Sciatic nerve (tissue), 2 donors: ENCODE measurements at regions of chr2 and their contacts with region 1.

Region 1: DNA sequence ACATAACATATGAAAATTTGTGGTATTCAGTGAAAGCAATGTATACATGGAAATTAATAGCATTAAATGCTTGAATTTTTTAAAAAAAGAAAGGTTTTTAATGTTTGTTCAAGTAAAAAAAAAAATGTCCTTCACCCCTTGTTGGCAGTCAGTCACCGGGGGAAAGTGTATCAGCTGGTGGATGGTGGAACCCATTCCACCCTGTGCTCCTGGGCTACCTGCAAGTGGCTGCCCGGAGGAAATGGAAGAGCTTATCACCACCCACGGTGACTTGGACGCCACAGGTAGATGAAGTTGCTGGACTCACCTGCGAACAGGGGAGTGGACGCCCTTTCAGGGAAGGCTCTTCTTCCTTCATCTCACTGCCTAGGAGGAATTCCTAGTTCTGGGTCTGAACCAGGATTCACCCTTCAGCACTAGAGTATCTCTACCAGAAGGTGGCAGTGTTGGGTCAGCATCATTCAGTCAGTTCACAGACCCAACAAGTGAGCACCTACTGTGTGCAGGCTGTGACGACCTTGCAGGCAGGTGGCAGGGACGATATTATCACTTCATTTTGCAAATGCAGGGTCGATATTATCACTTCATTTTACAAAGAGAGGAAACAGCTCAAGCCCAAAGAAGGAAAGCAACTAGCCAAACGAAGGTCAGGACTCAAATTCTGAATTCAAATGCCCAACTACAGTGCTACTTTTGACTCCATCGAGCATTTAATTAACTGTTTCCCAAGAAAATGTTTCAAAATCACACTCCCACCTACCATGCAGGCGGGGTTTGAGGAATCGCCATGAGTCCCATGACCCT is 35.8 kb downstream of the CIB4 start:
- DNase-seq: no peak
- ATAC-seq: peak; percentile 67

Region 2: GRCh38 chr2:26542676-26543505 is 62.5 kb before region 1 on chr2:
- intact Hi-C with region 1: no loop called
- DNase-seq: no peak
- ATAC-seq: no peak

Region 3: GRCh38 chr2:26561918-26562810 is 43.2 kb before region 1 on chr2:
- intact Hi-C with region 1: no loop called
- DNase-seq: peak; percentile 74
- ATAC-seq: peak; percentile 81

Region 4: GRCh38 chr2:26740890-26741302 is 135.5 kb after region 1 on chr2:
- intact Hi-C with region 1: loop called (anchors 5 kb)
- DNase-seq: no peak
- ATAC-seq: no peak